WTC11 (cell line): ENCODE measurements at regions of chr1 and their contacts with region 1.

Region 1: GRCh38 chr1:45359882-45360513 is 19.8 kb upstream of the MUTYH start:
- DNase-seq: peak; percentile 32
- ATAC-seq: peak; percentile 50
- H3K4me3 Mint-ChIP-seq: peak overlapping the region; percentile 55
- H3K27ac Mint-ChIP-seq: peak overlapping the region; percentile 95
- H3K4me1 Mint-ChIP-seq: peaks cover 30% of the 10 kb centered on the region
- H3K27me3 Mint-ChIP-seq: no peaks in the 10 kb centered on the region
- CTCF ChIP-seq: peak; percentile 20; the same call in 1 of the 2 replicates

Region 2: GRCh38 chr1:44903011-44903680 is 456.9 kb before region 1 on chr1:
- CTCF ChIA-PET with region 1: no interaction called
- POLR2A ChIA-PET with region 1: no interaction called
- DNase-seq: no peak
- ATAC-seq: no peak
- H3K4me3 Mint-ChIP-seq: no peak overlapping the region
- H3K27ac Mint-ChIP-seq: no peak overlapping the region
- H3K4me1 Mint-ChIP-seq: no peaks in the 10 kb centered on the region
- H3K27me3 Mint-ChIP-seq: no peaks in the 10 kb centered on the region
- CTCF ChIP-seq: no peak

Region 3: GRCh38 chr1:45348716-45349677 is 11.0 kb before region 1 on chr1:
- CTCF ChIA-PET with region 1: interaction called, 10 read pairs
- POLR2A ChIA-PET with region 1: interaction called, 5 read pairs
- DNase-seq: no peak
- ATAC-seq: no peak
- H3K4me3 Mint-ChIP-seq: no peak overlapping the region
- H3K27ac Mint-ChIP-seq: 0 out of 2 replicates have a peak overlapping the region, but pooled peaks have one; percentile 13
- H3K4me1 Mint-ChIP-seq: no peaks in the 10 kb centered on the region
- H3K27me3 Mint-ChIP-seq: no peaks in the 10 kb centered on the region
- CTCF ChIP-seq: no peak